Activated T-helper 1 cell treated with anti-CD3 and anti-CD28 coated beads, Interleukin-12 subunit alpha, Interleukin-12 subunit beta, Interleukin-2, Interleukin-4 antibody, amounts not matched to agents 30 ng/mL and 10 ng/mL and 1 ng/mL, durations not matched to agents 14 hours and 24 hours and 36 hours (primary cell): ENCODE measurements at regions of chr20 and their contacts with region 1.

Region 1: GRCh38 chr20:58888521-58889333 is 36.2 kb downstream of the GNAS start:
- DNase-seq: peak; percentile 79
- H3K4me3 Mint-ChIP-seq: peak overlapping the region; percentile 81
- H3K27ac Mint-ChIP-seq: peak overlapping the region; percentile 40
- H3K4me1 Mint-ChIP-seq: peaks cover 33% of the 10 kb centered on the region
- H3K27me3 Mint-ChIP-seq: no peaks in the 10 kb centered on the region

Region 2: DNA sequence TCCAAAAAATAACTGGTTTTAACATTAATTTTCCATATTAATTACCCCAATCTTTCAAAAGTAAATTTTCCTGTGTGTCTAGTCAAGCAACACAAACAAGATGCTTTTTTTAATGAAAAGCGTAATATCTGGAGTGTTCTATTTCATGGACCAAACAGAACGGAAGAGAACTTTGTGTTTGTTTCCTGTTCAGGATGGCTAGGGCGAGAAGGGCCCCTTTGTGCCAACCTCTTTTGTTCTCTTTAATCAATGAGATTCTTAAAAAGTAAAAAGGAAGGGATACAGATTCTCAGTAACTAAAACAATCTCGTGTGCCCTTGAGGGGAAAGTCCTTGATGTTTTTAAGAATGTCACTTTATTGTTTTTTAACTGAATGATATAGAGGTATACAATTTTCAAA is 19.5 kb after region 1 on chr20:
- intact Hi-C with region 1: no loop called
- DNase-seq: no peak
- H3K4me3 Mint-ChIP-seq: peak overlapping the region; percentile 81
- H3K27ac Mint-ChIP-seq: peak overlapping the region; percentile 95
- H3K4me1 Mint-ChIP-seq: peaks cover 52% of the 10 kb centered on the region
- H3K27me3 Mint-ChIP-seq: no peaks in the 10 kb centered on the region

Region 3: GRCh38 chr20:59165891-59166709 is 277.4 kb after region 1 on chr20:
- intact Hi-C with region 1: loop called (anchors 5 kb)
- DNase-seq: no peak
- H3K4me3 Mint-ChIP-seq: peak overlapping the region; percentile 88
- H3K27ac Mint-ChIP-seq: peak overlapping the region; percentile 98
- H3K4me1 Mint-ChIP-seq: peaks cover 88% of the 10 kb centered on the region
- H3K27me3 Mint-ChIP-seq: no peaks in the 10 kb centered on the region